B cell (primary cell): ENCODE measurements at regions of chr11 and their contacts with region 1.

Region 1: GRCh38 chr11:67265633-67266423 is 445 bp upstream of the GRK2 start:
- DNase-seq: peak; percentile 89
- ATAC-seq: peak; percentile 69
- H3K4me3 ChIP-seq: no peak overlapping the region
- H3K4me3 Mint-ChIP-seq: peak overlapping the region; percentile 81
- H3K27ac ChIP-seq: peak overlapping the region; percentile 55 to 63
- H3K27ac Mint-ChIP-seq: peak overlapping the region; percentile 89
- H3K4me1 ChIP-seq: peaks cover 63 to 65% of the 10 kb centered on the region in 2 donors
- H3K4me1 Mint-ChIP-seq: peaks cover 66% of the 10 kb centered on the region
- H3K27me3 ChIP-seq: peaks cover 0 to 9% (median 2%) of the 10 kb centered on the region in 4 experiments
- H3K27me3 Mint-ChIP-seq: peaks cover 6% of the 10 kb centered on the region
- CTCF ChIP-seq: peak; percentile 69

Region 2: DNA sequence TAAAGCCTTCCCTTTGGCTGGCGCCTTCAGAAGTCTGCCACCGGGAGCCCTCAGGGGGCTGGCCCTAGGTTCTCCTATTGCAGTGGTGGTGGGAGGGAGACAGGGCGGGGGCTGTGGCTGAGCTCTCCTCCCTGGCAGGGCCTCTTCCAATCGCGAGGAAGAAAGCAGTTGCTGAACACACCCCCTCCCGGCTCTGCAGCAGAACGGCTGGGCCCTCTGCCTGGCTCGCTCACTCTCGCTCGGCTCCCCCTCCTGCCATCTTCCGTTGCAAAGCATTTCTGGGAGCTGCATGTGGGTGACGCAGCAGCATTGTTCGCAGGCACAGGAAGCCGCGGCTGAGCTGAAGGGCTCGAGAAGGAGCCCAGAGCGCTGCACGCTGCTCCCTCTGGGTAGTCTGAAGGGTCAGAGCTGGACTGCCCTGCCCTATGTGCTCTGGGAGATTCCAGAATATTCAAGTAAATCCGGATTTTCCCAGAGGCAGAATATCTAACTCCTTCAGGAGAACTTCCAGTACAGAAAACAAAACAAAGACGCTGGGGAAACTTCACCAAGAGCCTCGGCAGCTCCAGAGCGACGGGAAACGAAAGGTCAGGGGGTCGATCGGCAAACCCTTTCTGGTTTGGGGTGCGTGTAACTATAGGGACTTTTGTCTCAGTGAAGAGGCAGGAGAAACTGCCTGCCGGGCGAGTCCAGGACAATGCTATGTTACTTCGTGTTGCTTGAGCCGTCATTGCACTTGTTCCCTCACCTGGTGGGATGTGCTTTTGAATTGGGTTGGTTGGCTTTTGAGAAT is 25.8 kb before region 1 on chr11:
- CTCF ChIA-PET with region 1: interaction called, 30 read pairs
- POLR2A ChIA-PET with region 1: interaction called, 9 read pairs
- intact Hi-C with region 1: no loop called
- DNase-seq: peak; percentile 96
- ATAC-seq: peak; percentile 94
- H3K4me3 ChIP-seq: peak overlapping the region; percentile 71 to 99 (median 82)
- H3K4me3 Mint-ChIP-seq: peak overlapping the region; percentile 96
- H3K27ac ChIP-seq: peak overlapping the region; percentile 86 to 91
- H3K27ac Mint-ChIP-seq: peak overlapping the region; percentile 99
- H3K4me1 ChIP-seq: peaks cover 26 to 34% of the 10 kb centered on the region in 2 donors
- H3K4me1 Mint-ChIP-seq: peaks cover 43% of the 10 kb centered on the region
- H3K27me3 ChIP-seq: no peaks in the 10 kb centered on the region
- H3K27me3 Mint-ChIP-seq: no peaks in the 10 kb centered on the region
- CTCF ChIP-seq: no peak

Region 3: DNA sequence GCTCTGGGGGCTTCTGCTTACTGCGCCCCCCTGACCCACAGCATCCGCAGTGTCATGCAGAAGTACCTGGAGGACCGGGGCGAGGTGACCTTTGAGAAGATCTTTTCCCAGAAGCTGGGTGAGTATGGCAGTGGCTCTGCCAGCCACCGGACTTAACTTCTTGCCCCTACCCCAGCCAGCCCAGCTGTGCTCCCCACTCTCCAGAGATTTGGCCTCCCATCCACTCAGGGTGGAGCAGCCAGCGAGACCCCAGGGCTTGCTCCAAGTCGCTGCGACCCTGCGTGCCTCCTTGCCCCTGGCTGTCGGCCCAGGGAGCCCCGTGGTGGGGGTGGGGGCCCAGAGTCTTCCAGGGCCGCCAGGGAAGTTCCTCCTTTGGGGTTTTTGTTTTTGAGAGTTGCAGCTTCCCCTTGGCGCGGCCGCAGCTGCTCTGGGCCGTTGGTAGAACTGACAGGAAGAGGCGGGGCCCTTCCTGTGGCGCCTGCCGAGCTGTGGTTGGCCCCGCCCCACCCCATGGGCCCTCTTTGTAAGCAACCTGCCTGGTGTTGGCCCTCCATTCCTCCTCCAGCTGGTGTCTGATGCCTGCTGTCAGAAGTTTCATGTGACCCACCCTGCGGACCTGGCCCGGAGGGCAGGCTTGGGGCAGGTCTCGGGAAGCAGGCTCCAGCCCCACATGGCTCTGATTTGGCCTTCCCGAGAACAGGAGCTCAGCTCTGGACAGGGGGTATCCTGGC is 11.6 kb after region 1 on chr11:
- CTCF ChIA-PET with region 1: interaction called, 46 read pairs
- POLR2A ChIA-PET with region 1: interaction called, 51 read pairs
- intact Hi-C with region 1: loop called (anchors 1 kb)
- DNase-seq: peak; percentile 96
- ATAC-seq: peak; percentile 95
- H3K4me3 ChIP-seq: peak overlapping the region; percentile 35 to 59 (median 50)
- H3K4me3 Mint-ChIP-seq: peak overlapping the region; percentile 84
- H3K27ac ChIP-seq: peak overlapping the region; percentile 82
- H3K27ac Mint-ChIP-seq: peak overlapping the region; percentile 95
- H3K4me1 ChIP-seq: peaks cover 82 to 86% of the 10 kb centered on the region in 2 donors
- H3K4me1 Mint-ChIP-seq: peaks cover 76% of the 10 kb centered on the region
- H3K27me3 ChIP-seq: no peaks in the 10 kb centered on the region
- H3K27me3 Mint-ChIP-seq: no peaks in the 10 kb centered on the region
- CTCF ChIP-seq: no peak

Region 4: GRCh38 chr11:67303132-67303834 is 37.5 kb after region 1 on chr11 and contains the start of gene SSH3:
- CTCF ChIA-PET with region 1: interaction called, 11 read pairs
- POLR2A ChIA-PET with region 1: interaction called, 4 read pairs
- intact Hi-C with region 1: no loop called
- DNase-seq: no peak
- ATAC-seq: peak; percentile 88
- H3K4me3 ChIP-seq: peak within 1 kb of the TSS in 3 of 5 experiments; percentile 38 to 56 (median 44)
- H3K4me3 Mint-ChIP-seq: peak within 1 kb of the TSS; percentile 37
- H3K27ac ChIP-seq: no peak within 1 kb of the TSS
- H3K27ac Mint-ChIP-seq: no peak within 1 kb of the TSS
- H3K4me1 ChIP-seq: peaks cover 3 to 4% of the 10 kb centered on the region in 2 donors
- H3K4me1 Mint-ChIP-seq: peaks cover 3% of the 10 kb centered on the region
- H3K27me3 ChIP-seq: no peaks in the 10 kb centered on the region
- H3K27me3 Mint-ChIP-seq: no peaks in the 10 kb centered on the region
- CTCF ChIP-seq: no peak
- total RNA-seq, gene SSH3: 7.2 and 8.5 TPM in 2 replicates

Region 5: DNA sequence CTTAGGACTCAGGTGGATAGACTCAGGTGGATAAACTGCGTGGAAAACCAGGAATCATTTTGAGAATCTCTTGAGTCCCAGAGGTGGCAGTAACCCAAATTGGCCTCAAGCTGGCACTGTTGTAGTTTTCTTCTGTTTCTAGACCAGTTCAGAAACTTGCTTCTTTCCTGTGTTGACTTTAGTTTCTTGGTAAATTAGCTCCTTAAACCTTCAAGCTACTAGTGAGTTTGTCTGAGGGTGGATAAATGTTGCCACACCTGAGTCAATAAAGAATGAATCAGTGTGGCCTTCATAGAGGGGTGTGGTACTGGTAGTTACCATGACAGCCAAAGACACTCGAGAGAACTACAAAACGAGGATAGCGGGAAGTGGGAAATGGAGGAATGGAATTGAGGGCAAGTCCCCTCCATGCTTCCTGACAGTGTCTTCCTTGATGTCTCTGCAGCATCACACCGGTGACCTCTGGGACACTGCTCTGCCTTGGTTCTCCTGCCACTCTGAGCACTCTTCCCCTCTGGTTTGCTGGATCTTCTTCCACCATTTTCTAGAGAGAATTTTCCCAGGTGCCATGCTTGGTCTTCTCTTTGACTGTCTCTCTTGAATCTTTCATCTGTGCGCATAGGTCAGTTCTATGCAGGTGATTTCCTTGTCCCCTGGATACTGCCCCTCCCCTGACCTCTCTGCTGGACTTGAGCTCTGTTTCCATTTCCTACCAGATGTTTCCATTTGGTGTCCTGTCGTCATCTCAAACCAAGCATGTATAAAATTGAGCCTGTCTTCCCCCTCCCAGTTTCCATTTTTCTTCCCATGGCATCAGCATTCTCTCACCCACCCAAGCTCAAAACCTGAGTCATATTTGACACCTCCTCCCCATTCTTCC is 80.3 kb after region 1 on chr11:
- CTCF ChIA-PET with region 1: interaction called, 29 read pairs
- POLR2A ChIA-PET with region 1: interaction called, 26 read pairs
- intact Hi-C with region 1: no loop called
- DNase-seq: no peak
- ATAC-seq: peak; percentile 48
- H3K4me3 ChIP-seq: no peak overlapping the region
- H3K4me3 Mint-ChIP-seq: peak overlapping the region; percentile 77
- H3K27ac ChIP-seq: peak overlapping the region; percentile 61 to 84
- H3K27ac Mint-ChIP-seq: peak overlapping the region; percentile 88
- H3K4me1 ChIP-seq: peaks cover 66 to 80% of the 10 kb centered on the region in 2 donors
- H3K4me1 Mint-ChIP-seq: peaks cover 70% of the 10 kb centered on the region
- H3K27me3 ChIP-seq: no peaks in the 10 kb centered on the region
- H3K27me3 Mint-ChIP-seq: no peaks in the 10 kb centered on the region
- CTCF ChIP-seq: peak; percentile 79

Region 6: DNA sequence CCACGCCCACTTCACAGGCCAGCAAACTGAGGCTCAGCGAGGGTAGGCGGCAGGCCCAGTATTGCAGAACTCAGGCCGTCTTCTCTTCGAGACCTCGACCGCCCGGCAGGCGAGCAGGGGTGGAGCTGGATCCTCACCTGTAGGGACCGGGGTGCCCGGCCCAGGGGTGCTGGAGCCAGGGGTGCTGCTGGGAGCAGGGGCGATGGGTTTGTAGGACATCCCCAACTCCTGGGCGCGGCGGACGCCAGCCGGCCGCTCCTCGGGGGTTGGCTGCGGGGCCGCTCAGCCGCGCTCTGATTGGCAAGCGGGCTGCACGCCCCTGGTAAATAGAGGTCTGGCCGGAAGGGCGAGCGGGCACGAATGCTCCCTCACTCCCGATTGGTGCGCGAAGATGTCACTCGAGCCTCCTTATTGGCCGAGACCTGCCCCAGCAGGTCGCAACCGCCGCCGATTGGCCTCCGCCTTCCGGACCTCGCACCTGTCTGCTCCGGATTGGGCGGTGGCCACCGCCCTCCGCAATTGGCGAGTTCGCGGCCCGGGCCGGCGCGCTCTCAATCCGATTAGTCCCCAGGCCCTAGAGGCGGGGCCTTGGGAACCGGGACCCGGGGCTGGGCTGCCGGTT is 242.1 kb after region 1 on chr11 and contains the start of gene CDK2AP2:
- CTCF ChIA-PET with region 1: no interaction called
- POLR2A ChIA-PET with region 1: no interaction called
- intact Hi-C with region 1: loop called (anchors 5 kb)
- DNase-seq: peak; percentile 100
- ATAC-seq: peak; percentile 74
- H3K4me3 ChIP-seq: peak within 1 kb of the TSS; percentile 57 to 88 (median 79)
- H3K4me3 Mint-ChIP-seq: peak within 1 kb of the TSS; percentile 92
- H3K27ac ChIP-seq: peak within 1 kb of the TSS; percentile 84 to 98
- H3K27ac Mint-ChIP-seq: peak within 1 kb of the TSS; percentile 95
- H3K4me1 ChIP-seq: peaks cover 39 to 46% of the 10 kb centered on the region in 2 donors
- H3K4me1 Mint-ChIP-seq: peaks cover 42% of the 10 kb centered on the region
- H3K27me3 ChIP-seq: peaks cover 0 to 16% (median 4%) of the 10 kb centered on the region in 4 experiments
- H3K27me3 Mint-ChIP-seq: peaks cover 8% of the 10 kb centered on the region
- CTCF ChIP-seq: no peak
- total RNA-seq, gene CDK2AP2: 50.3 and 62.7 TPM in 2 replicates

Region 7: GRCh38 chr11:67685641-67686495 is 420.0 kb after region 1 on chr11:
- CTCF ChIA-PET with region 1: no interaction called
- POLR2A ChIA-PET with region 1: no interaction called
- intact Hi-C with region 1: no loop called
- DNase-seq: no peak
- ATAC-seq: no peak
- H3K4me3 ChIP-seq: no peak overlapping the region
- H3K4me3 Mint-ChIP-seq: no peak overlapping the region
- H3K27ac ChIP-seq: no peak overlapping the region
- H3K27ac Mint-ChIP-seq: no peak overlapping the region
- H3K4me1 ChIP-seq: no peaks in the 10 kb centered on the region
- H3K4me1 Mint-ChIP-seq: peaks cover 2% of the 10 kb centered on the region
- H3K27me3 ChIP-seq: peaks cover 0 to 7% (median 2%) of the 10 kb centered on the region in 4 experiments
- H3K27me3 Mint-ChIP-seq: peaks cover 28% of the 10 kb centered on the region
- CTCF ChIP-seq: no peak